OCI-LY7 (cell line): ENCODE measurements at regions of chr1 and their contacts with region 1.

Region 1: GRCh38 chr1:171251042-171251951 is 3.0 kb downstream of the FMO1 start:
- DNase-seq: peak; percentile 87
- H3K4me3 ChIP-seq: peak overlapping the region; percentile 76
- H3K27ac ChIP-seq: peak overlapping the region; percentile 91
- H3K4me1 ChIP-seq: peaks cover 56% of the 10 kb centered on the region
- CTCF ChIP-seq: peak; percentile 81; the same call in 1 of the 2 replicates

Region 2: DNA sequence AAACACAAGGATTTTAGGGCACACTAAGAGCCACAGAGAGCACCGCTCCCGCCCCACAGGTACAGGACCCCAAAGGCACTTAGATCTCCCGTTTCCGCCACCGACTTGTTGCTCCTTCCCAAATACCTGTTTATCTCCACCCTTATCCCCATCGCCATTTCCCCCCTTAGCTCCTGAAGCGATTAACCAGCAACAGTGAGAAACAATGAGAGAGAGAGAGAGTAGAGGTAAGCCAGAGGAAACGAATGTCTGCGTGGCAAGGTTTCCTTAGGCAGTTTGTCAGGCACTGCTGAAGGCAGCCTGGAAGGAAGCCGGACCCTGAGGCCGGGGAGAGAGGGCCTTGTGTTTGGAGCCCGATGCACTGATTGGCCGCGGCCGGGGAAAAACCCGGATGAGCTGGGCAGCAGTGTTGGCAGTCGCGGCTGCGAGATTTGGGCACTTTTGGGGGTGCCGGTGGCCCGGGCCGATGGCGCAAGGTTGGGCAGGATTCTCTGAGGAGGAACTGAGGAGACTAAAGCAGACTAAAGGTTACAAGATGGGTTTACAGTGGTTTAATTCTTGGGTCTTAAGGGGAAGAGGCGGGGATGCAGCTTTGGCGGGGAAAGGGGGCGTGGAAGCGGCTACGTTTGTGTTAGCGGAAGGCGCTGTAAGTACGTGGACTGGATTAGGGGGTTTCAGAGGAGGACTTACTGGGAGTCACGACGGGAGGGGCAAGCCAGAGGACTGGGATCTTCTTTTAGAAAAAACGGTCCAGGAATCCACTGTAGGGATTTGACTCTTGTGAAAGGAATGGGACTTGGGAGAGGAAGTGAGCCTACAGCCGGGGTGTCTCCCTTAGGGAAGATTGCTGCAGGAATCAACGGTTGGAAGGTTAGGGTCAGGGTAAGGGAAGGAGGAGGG is 719.3 kb before region 1 on chr1 and contains the start of gene GORAB:
- CTCF ChIA-PET with region 1: no interaction called
- POLR2A ChIA-PET with region 1: no interaction called
- intact Hi-C with region 1: loop called (anchors 5 kb)
- DNase-seq: peak; percentile 90
- H3K4me3 ChIP-seq: peak within 1 kb of the TSS; percentile 97
- H3K27ac ChIP-seq: peak within 1 kb of the TSS; percentile 68
- H3K4me1 ChIP-seq: peaks cover 16% of the 10 kb centered on the region
- CTCF ChIP-seq: no peak
- total RNA-seq, gene GORAB: 11.5 and 19.8 TPM in 2 replicates

Region 3: GRCh38 chr1:171055966-171056643 is 195.2 kb before region 1 on chr1:
- CTCF ChIA-PET with region 1: no interaction called
- POLR2A ChIA-PET with region 1: no interaction called
- intact Hi-C with region 1: no loop called
- DNase-seq: no peak
- H3K4me3 ChIP-seq: no peak overlapping the region
- H3K27ac ChIP-seq: no peak overlapping the region
- H3K4me1 ChIP-seq: no peaks in the 10 kb centered on the region
- CTCF ChIP-seq: no peak

Region 4: DNA sequence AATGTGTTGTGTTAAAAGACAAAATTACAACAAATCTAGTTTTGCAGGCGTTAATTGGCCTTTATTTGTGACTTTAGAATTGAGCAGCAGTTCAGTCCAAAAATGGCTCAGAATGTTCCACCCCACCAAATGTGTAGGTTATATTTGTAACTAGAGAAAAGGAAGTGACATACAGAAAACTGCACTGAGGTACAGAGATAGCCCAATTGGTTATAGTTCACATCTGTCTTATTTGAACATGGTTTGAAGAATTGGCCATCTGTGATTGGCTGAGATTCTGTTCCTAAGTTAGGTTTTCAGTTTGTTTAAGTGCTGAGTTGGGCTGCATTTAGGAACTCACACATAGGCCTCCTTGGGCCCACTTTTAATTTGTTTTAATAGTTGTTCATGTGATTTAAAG is 78.2 kb before region 1 on chr1:
- CTCF ChIA-PET with region 1: no interaction called
- POLR2A ChIA-PET with region 1: no interaction called
- intact Hi-C with region 1: no loop called
- DNase-seq: peak; percentile 59
- H3K4me3 ChIP-seq: no peak overlapping the region
- H3K27ac ChIP-seq: peak overlapping the region; percentile 4
- H3K4me1 ChIP-seq: peaks cover 16% of the 10 kb centered on the region
- CTCF ChIP-seq: no peak

Region 5: GRCh38 chr1:171279678-171280077 is 28.4 kb after region 1 on chr1:
- CTCF ChIA-PET with region 1: interaction called, 6 read pairs
- POLR2A ChIA-PET with region 1: interaction called, 40 read pairs
- intact Hi-C with region 1: loop called (anchors 1 kb)
- DNase-seq: peak; percentile 62
- H3K4me3 ChIP-seq: peak overlapping the region; percentile 22
- H3K27ac ChIP-seq: peak overlapping the region; percentile 53
- H3K4me1 ChIP-seq: peaks cover 54% of the 10 kb centered on the region
- CTCF ChIP-seq: no peak

Region 6: DNA sequence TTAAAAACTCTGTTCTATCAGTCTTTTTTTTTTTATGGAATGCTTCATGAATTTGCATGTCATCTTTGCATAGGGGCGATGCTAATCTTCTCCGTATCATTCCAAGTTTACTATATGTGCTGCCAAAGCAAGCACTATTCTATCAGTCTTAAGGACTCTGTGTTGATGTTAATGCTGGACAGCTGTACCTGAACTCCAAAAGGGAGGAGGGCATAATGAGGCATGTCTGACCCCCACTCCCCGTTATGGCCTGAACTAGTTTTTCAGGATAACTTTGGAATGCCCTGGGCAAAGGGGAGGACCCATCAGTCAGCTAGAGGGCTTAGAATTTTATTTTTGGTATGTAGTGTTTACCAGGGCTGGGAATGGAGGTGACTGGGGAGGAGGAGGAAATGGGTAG is 167.3 kb after region 1 on chr1:
- CTCF ChIA-PET with region 1: no interaction called
- POLR2A ChIA-PET with region 1: no interaction called
- intact Hi-C with region 1: no loop called
- DNase-seq: no peak
- H3K4me3 ChIP-seq: no peak overlapping the region
- H3K27ac ChIP-seq: no peak overlapping the region
- H3K4me1 ChIP-seq: no peaks in the 10 kb centered on the region
- CTCF ChIP-seq: no peak

Region 7: GRCh38 chr1:171485375-171486047 is 234.2 kb after region 1 on chr1 and contains the start of gene PRRC2C:
- CTCF ChIA-PET with region 1: no interaction called
- POLR2A ChIA-PET with region 1: interaction called, 5 read pairs
- intact Hi-C with region 1: loop called (anchors 5 kb)
- DNase-seq: peak; percentile 98
- H3K4me3 ChIP-seq: peak within 1 kb of the TSS; percentile 97
- H3K27ac ChIP-seq: peak within 1 kb of the TSS; percentile 87
- H3K4me1 ChIP-seq: peaks cover 38% of the 10 kb centered on the region
- CTCF ChIP-seq: peak; percentile 86
- total RNA-seq, gene PRRC2C: 73.5 and 75.3 TPM in 2 replicates

Region 8: DNA sequence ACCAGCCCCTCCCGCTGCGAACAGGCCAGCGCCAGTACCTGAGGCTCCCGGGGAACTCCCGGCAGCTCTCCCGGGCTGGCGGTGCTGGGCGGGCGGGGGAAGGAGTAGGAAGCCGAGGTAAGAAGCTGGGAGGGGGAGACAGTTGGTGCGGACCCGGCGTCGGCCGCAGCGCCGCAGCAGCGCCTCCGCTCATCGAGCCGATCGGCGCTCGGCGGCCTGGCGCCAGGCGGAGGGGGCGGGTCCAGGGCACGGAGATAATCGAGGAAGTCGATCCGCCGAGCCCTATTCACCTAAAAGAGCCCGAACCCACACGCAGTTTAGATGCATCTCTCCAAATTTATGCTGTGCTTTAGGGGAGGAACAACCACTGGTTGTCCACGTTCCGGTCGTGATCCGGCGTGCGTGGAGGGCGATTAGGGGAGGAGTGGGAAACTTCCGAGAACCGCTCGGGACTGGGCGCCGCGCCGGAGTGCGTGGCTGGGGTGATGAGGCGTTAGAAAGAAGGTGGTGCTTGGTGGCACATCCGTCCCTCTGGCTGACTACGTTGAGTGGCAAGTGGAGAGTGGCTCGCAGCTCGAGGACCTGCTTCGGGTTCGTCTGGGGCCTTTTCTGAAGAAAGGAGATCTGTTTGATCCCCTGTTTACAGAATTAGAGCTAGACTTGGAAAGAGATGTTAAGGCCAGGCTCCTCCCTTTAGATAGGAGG is 490.7 kb after region 1 on chr1 and contains the start of gene VAMP4:
- CTCF ChIA-PET with region 1: no interaction called
- POLR2A ChIA-PET with region 1: interaction called, 3 read pairs
- intact Hi-C with region 1: loop called (anchors 5 kb)
- DNase-seq: peak; percentile 90
- H3K4me3 ChIP-seq: peak within 1 kb of the TSS; percentile 85
- H3K27ac ChIP-seq: peak within 1 kb of the TSS; percentile 66
- H3K4me1 ChIP-seq: peaks cover 30% of the 10 kb centered on the region
- CTCF ChIP-seq: no peak
- total RNA-seq, gene VAMP4: 3.2 and 3.4 TPM in 2 replicates